ENCODE measurements at regions of chr14 and their contacts with region 1.

Region 1: GRCh38 chr14:106210652-106211051 is 684.3 kb downstream of the TMEM121 start:
- DNase-seq: peak in 2 of 4 experiments; percentile 30 to 48
- ATAC-seq: peak; percentile 96
- H3K4me3 ChIP-seq: no peak overlapping the region
- H3K27ac ChIP-seq: no peak overlapping the region
- H3K4me1 ChIP-seq: peaks cover 0 to 3% of the 10 kb centered on the region in 2 experiments; a peak in 3 of 5 replicates
- H3K27me3 ChIP-seq: no peaks in the 10 kb centered on the region; a peak in 1 of 5 replicates
- CTCF ChIP-seq: peak; percentile 48 to 68 (median 50)
- EP300 ChIP-seq: no peak
- POLR2A ChIP-seq: no peak
- RAD21 ChIP-seq: peak in 1 of 2 experiments; percentile 27; a peak in 2 of 4 replicates

Region 2: DNA sequence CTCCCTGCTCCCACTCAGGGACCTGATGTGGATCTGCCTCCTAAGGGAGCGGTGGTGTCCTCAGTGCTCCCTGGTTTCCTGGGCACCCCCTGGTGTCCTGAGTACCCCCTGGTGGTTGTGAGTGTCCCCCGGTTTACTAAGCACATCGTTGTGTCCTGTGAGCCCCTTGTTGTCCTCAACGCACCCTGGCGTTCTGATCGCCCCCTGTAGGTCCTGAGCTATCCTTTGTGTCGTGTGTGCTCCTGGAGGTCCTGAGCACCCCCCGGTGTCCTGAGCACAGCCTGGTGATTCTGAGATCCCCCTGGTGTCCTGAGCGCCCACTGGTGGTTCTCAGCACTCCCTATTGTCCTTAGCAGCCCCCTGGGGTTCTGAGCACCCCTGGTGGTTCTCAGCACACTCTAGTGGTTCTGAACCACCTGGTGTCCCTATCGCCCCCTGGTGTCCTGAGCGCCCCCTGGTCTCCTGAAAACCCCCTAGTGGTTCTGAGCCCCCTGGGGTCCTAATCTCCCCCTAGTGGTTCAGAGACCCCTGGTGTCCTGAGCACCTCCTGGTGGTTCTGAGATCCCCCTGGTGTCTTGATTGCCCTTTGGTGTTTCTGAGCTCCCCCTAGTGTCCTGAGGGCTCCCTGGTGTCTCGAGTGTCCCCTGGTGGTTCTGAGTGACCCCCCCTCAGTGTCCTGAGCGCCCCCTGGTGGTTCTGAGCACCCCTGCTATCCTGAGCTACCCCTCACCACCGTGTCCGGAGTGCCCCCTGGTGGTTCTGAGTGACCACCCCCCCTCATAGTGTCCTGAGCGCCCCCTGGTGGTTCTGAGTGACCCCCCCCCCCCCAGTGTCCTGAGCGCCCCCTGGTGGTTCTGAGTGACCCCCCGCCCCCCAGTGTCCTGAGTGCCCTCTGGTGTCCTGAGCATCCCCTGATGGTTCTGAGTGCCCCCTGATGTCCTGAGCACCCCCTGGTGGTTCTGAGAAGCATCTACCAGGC is 69.1 kb before region 1 on chr14:
- CTCF ChIA-PET with region 1: no interaction called
- POLR2A ChIA-PET with region 1: no interaction called
- in situ Hi-C with region 1: no loop called
- intact Hi-C with region 1: loop called (anchors 10 kb)
- DNase-seq: peak; percentile 13 to 22 (median 16)
- ATAC-seq: no peak
- H3K4me3 ChIP-seq: no peak overlapping the region
- H3K27ac ChIP-seq: no peak overlapping the region
- H3K4me1 ChIP-seq: no peaks in the 10 kb centered on the region
- H3K27me3 ChIP-seq: no peaks in the 10 kb centered on the region
- CTCF ChIP-seq: peak; percentile 38 to 94 (median 48); a peak in 5 of 6 replicates
- EP300 ChIP-seq: no peak
- POLR2A ChIP-seq: no peak
- RAD21 ChIP-seq: no peak